Dendritic cell treated with granulocyte-macrophage colony-stimulating factor and Interleukin-4, amounts not matched to agents 40 ng/mL and 50 ng/mL, for 4 days (primary cell): ENCODE measurements at regions of chr4 and their contacts with region 1.

Region 1: GRCh38 chr4:78845472-78845871 is 69.3 kb downstream of the BMP2K start:
- H3K4me3 Mint-ChIP-seq: no peak overlapping the region
- H3K27ac Mint-ChIP-seq: no peak overlapping the region
- H3K4me1 Mint-ChIP-seq: peaks cover 7% of the 10 kb centered on the region
- H3K27me3 Mint-ChIP-seq: no peaks in the 10 kb centered on the region

Region 2: GRCh38 chr4:78809928-78810835 is 35.3 kb before region 1 on chr4:
- intact Hi-C with region 1: loop called (anchors 5 kb)
- H3K4me3 Mint-ChIP-seq: no peak overlapping the region
- H3K27ac Mint-ChIP-seq: no peak overlapping the region
- H3K4me1 Mint-ChIP-seq: peaks cover 50% of the 10 kb centered on the region
- H3K27me3 Mint-ChIP-seq: no peaks in the 10 kb centered on the region

Region 3: GRCh38 chr4:78880874-78881492 is 35.5 kb after region 1 on chr4:
- intact Hi-C with region 1: loop called (anchors 5 kb)
- H3K4me3 Mint-ChIP-seq: no peak overlapping the region
- H3K27ac Mint-ChIP-seq: no peak overlapping the region
- H3K4me1 Mint-ChIP-seq: peaks cover 5% of the 10 kb centered on the region
- H3K27me3 Mint-ChIP-seq: no peaks in the 10 kb centered on the region

Region 4: DNA sequence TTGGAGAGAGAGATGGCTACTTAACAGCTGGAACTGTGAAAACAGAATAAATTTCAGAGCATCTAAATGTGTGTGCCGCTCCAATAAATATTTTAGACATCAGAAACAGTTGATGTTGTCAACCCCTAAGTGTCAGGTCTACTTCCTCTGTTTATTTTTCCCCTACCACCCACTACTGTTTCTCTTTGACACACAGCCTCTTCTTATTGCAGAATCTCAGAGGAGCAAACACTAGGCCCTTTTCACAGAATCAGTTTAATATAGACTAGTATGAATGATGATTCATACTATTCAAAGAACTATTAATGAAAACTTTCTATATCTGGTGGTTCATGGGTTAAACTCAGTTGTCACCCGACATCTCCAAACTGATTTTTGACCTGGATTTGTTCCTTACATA is 446.5 kb after region 1 on chr4:
- intact Hi-C with region 1: no loop called
- H3K4me3 Mint-ChIP-seq: no peak overlapping the region
- H3K27ac Mint-ChIP-seq: no peak overlapping the region
- H3K4me1 Mint-ChIP-seq: no peaks in the 10 kb centered on the region
- H3K27me3 Mint-ChIP-seq: no peaks in the 10 kb centered on the region

Region 5: DNA sequence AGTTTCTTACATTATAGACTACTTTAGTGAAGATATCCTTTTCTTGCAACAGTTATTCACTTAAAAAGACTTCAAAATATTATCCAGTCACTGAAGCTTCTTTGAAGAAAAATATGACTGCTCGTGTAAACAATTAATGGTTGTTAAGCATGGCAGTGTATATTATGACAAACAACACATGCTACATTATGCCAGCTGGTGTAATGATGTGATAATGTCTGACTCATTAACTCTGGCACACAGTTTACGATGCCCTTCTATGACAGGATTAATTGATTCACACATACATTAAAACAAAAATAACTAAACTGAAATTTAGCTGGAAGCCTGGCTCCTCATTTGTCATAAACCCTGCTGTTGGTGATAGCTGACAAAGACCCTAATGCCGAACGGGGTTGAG is 540.2 kb after region 1 on chr4:
- intact Hi-C with region 1: no loop called
- H3K4me3 Mint-ChIP-seq: no peak overlapping the region
- H3K27ac Mint-ChIP-seq: no peak overlapping the region
- H3K4me1 Mint-ChIP-seq: no peaks in the 10 kb centered on the region
- H3K27me3 Mint-ChIP-seq: no peaks in the 10 kb centered on the region